ENCODE measurements at regions of chr5 and their contacts with region 1.

Region 1: DNA sequence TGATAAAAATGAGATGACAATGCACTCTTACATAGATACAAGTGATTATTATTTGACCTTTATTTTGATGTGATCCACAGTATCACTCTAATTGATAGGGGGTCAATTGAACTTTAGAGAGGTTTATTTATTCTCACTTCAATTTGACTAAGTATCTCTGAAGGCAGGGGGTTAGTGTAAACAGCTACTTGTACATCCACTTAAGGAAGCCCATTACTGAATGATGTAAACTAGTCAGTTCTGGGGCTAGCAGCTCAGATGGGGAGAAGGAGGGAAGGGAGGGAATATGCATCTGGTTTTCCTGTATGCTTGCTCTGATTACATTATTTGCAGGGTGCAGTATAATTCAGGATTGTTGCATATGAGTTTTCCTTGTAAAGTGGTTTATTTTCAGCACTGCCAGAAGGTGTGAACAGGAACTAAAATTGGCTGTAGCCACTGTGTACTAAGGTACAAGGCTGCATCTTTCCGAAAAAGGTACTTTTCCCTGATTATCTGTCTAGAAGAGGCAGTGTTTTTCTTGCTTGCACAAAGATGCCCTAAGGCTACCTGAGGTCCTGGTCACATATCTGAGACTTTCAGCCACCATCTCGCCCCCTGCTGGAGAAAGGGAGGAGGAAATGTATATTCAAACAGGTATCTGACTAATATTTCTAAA is 51.2 kb downstream of the MRPS27 start:
- DNase-seq: no peak
- ATAC-seq: peak; percentile 45
- H3K4me3 Mint-ChIP-seq: no peak overlapping the region
- H3K27ac Mint-ChIP-seq: no peak overlapping the region
- H3K4me1 Mint-ChIP-seq: peaks cover 5% of the 10 kb centered on the region
- H3K27me3 Mint-ChIP-seq: no peaks in the 10 kb centered on the region
- CTCF ChIP-seq: no peak

Region 2: DNA sequence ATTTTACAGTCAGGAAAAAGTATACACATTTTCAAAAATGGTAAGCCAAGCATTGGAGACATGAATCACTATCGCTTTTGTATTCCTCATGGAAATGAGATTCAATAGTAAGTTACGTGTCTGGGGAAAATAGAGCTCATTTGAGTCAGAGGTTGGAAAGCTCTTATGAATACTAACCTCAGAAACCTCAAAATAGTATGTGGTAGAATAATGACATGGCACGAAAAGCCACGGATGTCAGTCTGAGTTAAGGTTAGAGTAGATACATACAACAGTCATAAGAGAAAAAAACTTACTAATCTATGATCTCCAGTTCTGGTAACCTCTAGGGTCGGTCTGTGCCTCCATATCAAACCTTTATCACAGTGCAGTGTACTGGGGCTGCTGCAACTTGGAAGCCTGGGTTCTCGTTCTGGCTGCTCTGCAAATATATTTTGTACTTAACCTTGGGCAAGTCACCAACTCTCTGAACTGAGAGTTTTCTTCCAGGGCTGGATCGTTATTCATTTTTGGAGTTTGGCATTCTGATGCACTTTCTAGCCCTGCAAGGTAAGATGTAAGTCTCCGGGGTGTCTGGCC is 129.8 kb before region 1 on chr5:
- CTCF ChIA-PET with region 1: no interaction called
- POLR2A ChIA-PET with region 1: no interaction called
- intact Hi-C with region 1: loop called (anchors 1 kb)
- DNase-seq: no peak
- ATAC-seq: no peak
- H3K4me3 Mint-ChIP-seq: no peak overlapping the region
- H3K27ac Mint-ChIP-seq: no peak overlapping the region
- H3K4me1 Mint-ChIP-seq: no peaks in the 10 kb centered on the region
- H3K27me3 Mint-ChIP-seq: peaks cover 13% of the 10 kb centered on the region
- CTCF ChIP-seq: no peak

Region 3: DNA sequence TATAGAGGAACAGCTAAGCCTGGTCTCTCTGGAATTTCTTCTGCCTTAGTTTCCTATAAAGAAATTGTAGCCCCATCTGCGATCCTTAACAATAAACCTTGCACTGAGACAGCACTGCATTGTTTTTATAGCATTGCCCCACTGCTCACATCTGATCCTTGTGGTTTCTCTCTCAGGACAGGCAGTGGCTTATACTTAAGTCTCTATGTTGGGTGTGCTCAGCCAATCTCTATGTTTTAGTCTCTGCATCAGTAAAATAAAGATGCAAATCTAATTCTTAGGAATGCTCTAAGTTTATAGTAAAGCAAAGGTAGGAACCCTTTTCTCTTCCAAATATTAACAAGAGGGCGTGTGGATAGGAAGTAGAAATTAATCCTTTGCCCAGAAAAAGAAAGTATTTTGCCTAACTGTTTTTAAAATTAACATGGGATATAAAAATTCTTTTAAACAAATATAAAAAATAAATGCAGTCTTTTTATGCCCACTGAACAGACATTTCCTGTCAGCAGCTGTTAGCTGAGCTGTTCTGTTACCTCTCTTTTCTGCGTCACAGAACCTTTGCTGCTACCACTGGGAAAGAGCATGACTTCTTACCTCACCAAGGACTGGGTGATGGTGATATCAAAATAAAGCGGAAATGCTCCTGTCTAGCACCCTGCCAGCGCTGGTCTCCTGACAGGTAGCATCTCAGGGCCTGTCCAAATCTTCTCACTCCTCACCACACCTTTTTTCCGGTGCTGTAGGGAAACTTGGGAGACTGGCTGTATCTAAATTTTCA is 21.7 kb after region 1 on chr5:
- CTCF ChIA-PET with region 1: no interaction called
- POLR2A ChIA-PET with region 1: no interaction called
- intact Hi-C with region 1: loop called (anchors 2 kb)
- DNase-seq: no peak
- ATAC-seq: peak; percentile 72
- H3K4me3 Mint-ChIP-seq: no peak overlapping the region
- H3K27ac Mint-ChIP-seq: peak overlapping the region; percentile 70
- H3K4me1 Mint-ChIP-seq: peaks cover 58% of the 10 kb centered on the region
- H3K27me3 Mint-ChIP-seq: no peaks in the 10 kb centered on the region
- CTCF ChIP-seq: no peak

Region 4: DNA sequence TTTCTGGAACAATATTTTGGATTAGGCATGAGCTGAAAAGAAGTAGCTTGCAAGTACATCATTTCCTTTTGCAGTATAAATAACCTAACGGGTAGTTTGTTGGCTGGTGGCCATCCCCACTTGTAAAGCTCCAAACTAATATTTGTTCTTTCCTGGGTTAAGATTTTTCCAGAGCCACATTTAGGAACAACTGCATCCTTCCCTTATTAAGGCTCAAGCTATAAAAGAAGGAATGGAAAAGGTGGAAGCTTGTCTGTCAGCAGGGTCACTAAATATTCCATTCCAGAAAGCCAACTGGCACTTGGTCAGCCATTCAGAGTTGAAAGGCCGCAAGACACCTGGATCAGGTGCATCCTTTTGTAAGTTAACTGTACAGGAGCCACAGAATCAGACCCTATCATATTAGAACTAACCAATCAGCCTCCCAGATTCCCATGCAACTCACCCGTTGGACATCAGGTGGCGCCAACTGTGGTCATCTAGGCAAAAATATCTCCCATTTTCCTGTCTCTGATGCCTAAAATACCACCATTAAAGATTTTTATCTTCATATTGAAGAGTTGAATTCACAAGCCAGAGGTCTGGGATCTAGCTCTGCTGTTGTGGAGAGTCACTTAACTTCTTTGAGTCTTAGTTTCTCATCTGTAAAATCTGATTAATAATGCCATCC is 134.2 kb after region 1 on chr5:
- CTCF ChIA-PET with region 1: no interaction called
- POLR2A ChIA-PET with region 1: no interaction called
- intact Hi-C with region 1: no loop called
- DNase-seq: no peak
- ATAC-seq: no peak
- H3K4me3 Mint-ChIP-seq: no peak overlapping the region
- H3K27ac Mint-ChIP-seq: no peak overlapping the region
- H3K4me1 Mint-ChIP-seq: peaks cover 3% of the 10 kb centered on the region
- H3K27me3 Mint-ChIP-seq: peaks cover 15% of the 10 kb centered on the region
- CTCF ChIP-seq: no peak